Heart right ventricle (tissue), 16 donors: ENCODE measurements at regions of chr5 and their contacts with region 1.

Region 1: GRCh38 chr5:40679155-40679913 is 381 bp upstream of the PTGER4 start:
- DNase-seq: peak; percentile 93 to 94
- ATAC-seq: peak; percentile 94 to 99 (median 96)
- H3K4me3 ChIP-seq: peak overlapping the region; percentile 65 to 98 (median 86)
- H3K27ac ChIP-seq: peak overlapping the region; percentile 66 to 96 (median 90)
- H3K4me1 ChIP-seq: peaks cover 0 to 51% (median 21%) of the 10 kb centered on the region in 9 donors
- H3K27me3 ChIP-seq: peaks cover 0 to 26% (median 10%) of the 10 kb centered on the region in 7 donors
- CTCF ChIP-seq: no peak

Region 2: GRCh38 chr5:39714036-39714698 is 965.2 kb before region 1 on chr5:
- intact Hi-C with region 1: loop called in 2 of 10 experiments (anchors 5 to 10 kb)
- DNase-seq: peak in 1 of 2 donors; percentile 7
- ATAC-seq: peak in 2 of 8 donors; percentile 55 to 59
- H3K4me3 ChIP-seq: no peak overlapping the region
- H3K27ac ChIP-seq: no peak overlapping the region
- H3K4me1 ChIP-seq: no peaks in the 10 kb centered on the region
- H3K27me3 ChIP-seq: no peaks in the 10 kb centered on the region
- CTCF ChIP-seq: peak; percentile 15 to 73 (median 61)

Region 3: GRCh38 chr5:40202814-40203440 is 476.4 kb before region 1 on chr5:
- intact Hi-C with region 1: loop called in 1 of 10 experiments (anchors 5 kb)
- DNase-seq: no peak
- ATAC-seq: peak; percentile 58 to 85 (median 70)
- H3K4me3 ChIP-seq: no peak overlapping the region
- H3K27ac ChIP-seq: peak overlapping the region in 8 of 10 donors; percentile 33 to 75 (median 63)
- H3K4me1 ChIP-seq: peaks cover 0 to 27% (median 15%) of the 10 kb centered on the region in 9 donors
- H3K27me3 ChIP-seq: no peaks in the 10 kb centered on the region
- CTCF ChIP-seq: no peak

Region 4: GRCh38 chr5:40570408-40571129 is 108.8 kb before region 1 on chr5:
- intact Hi-C with region 1: loop called in 1 of 10 experiments (anchors 5 kb)
- DNase-seq: no peak
- ATAC-seq: peak in 5 of 8 donors; percentile 39 to 75 (median 60)
- H3K4me3 ChIP-seq: no peak overlapping the region
- H3K27ac ChIP-seq: peak overlapping the region in 7 of 10 donors; percentile 29 to 76 (median 61)
- H3K4me1 ChIP-seq: peaks cover 0 to 24% (median 0%) of the 10 kb centered on the region in 9 donors
- H3K27me3 ChIP-seq: no peaks in the 10 kb centered on the region
- CTCF ChIP-seq: no peak

Region 5: GRCh38 chr5:40587284-40587882 is 92.0 kb before region 1 on chr5:
- intact Hi-C with region 1: no loop called
- DNase-seq: no peak
- ATAC-seq: no peak
- H3K4me3 ChIP-seq: no peak overlapping the region
- H3K27ac ChIP-seq: no peak overlapping the region
- H3K4me1 ChIP-seq: peaks cover 0 to 11% (median 0%) of the 10 kb centered on the region in 9 donors
- H3K27me3 ChIP-seq: no peaks in the 10 kb centered on the region
- CTCF ChIP-seq: no peak

Region 6: DNA sequence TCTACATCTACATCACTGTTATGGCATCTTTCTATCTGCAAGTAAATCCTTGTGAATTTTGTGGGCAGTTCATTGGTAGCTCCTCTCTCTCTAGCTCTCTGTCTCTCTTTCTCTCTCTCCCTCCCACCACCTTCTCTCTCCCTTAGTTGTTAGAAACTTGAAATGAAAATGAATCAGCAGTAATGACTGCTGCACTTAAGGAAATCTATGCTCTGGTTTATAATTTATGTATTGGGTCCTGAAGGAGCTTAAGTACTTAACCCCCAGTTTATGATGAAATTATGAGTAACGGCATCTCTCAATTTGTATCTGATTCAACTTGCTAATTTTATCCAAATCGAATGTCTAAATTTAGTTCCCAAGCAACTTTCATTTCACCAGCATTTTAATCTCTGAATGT is 51.6 kb before region 1 on chr5:
- intact Hi-C with region 1: loop called in 1 of 10 experiments (anchors 2 kb)
- DNase-seq: no peak
- ATAC-seq: no peak
- H3K4me3 ChIP-seq: no peak overlapping the region
- H3K27ac ChIP-seq: no peak overlapping the region
- H3K4me1 ChIP-seq: peaks cover 0 to 25% (median 0%) of the 10 kb centered on the region in 9 donors
- H3K27me3 ChIP-seq: no peaks in the 10 kb centered on the region
- CTCF ChIP-seq: no peak